Activated T-helper 1 cell treated with anti-CD3 and anti-CD28 coated beads, Interleukin-12 subunit alpha, Interleukin-12 subunit beta, Interleukin-2, Interleukin-4 antibody, amounts not matched to agents 30 ng/mL and 10 ng/mL and 1 ng/mL, durations not matched to agents 14 hours and 24 hours and 36 hours (primary cell): ENCODE measurements at regions of chr5 and their contacts with region 1.

Region 1: DNA sequence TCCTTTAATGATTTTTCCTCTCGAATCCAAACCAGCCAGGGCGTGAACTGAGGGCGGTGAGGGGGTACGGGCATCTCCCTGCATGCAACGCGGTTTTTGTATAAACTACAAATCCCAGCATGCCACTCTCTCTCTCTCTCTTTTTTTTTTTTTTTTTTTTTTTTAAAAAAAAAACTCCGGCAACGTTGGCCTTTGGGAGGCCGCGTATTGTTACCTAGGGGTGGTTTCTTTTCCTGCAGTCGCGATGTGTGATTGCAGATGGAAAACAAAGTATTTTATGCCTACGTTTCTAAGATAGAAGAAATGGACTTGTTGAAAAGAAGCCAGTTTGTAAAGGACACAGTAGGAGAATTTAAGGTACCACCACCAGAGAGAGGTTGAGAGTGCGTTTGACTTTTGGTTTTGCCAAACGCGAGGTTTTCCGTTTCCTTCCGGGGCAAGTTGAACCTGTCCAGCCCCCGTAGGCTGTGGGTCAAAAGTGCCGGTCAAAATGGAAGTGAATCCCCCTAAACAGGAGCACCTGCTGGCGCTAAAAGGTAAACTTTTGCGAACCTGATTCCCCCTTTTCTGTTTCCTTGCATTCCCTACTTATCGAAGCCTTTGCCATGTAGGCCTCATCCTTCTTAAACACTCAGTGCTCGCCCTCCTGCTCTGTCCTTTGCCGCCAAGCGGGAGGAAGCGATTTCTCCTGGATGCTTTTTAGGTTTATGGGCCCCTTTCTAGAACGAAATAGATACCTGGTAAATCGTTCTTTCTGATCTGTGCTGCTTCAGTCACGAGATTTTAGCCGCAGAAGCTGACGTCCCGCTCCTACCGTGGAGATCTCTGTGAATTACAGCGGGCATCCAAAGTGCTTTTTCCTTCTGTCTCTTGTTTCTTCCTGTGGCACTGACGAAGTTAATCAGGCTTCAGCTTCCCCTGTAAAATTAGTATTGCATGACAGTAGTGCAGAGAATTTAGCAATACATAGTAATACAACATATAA is at the starts of genes SHLD3 and TRAPPC13:
- DNase-seq: peak; percentile 81
- H3K4me3 Mint-ChIP-seq: peak within 1 kb of the TSS; percentile 94
- H3K27ac Mint-ChIP-seq: peak within 1 kb of the TSS; percentile 96
- H3K4me1 Mint-ChIP-seq: peaks cover 33% of the 10 kb centered on the region
- H3K27me3 Mint-ChIP-seq: no peaks in the 10 kb centered on the region
- total RNA-seq, gene SHLD3: 6.5 and 7.6 TPM in 2 replicates
- total RNA-seq, gene TRAPPC13: 21.7 and 23.7 TPM in 2 replicates

Region 2: DNA sequence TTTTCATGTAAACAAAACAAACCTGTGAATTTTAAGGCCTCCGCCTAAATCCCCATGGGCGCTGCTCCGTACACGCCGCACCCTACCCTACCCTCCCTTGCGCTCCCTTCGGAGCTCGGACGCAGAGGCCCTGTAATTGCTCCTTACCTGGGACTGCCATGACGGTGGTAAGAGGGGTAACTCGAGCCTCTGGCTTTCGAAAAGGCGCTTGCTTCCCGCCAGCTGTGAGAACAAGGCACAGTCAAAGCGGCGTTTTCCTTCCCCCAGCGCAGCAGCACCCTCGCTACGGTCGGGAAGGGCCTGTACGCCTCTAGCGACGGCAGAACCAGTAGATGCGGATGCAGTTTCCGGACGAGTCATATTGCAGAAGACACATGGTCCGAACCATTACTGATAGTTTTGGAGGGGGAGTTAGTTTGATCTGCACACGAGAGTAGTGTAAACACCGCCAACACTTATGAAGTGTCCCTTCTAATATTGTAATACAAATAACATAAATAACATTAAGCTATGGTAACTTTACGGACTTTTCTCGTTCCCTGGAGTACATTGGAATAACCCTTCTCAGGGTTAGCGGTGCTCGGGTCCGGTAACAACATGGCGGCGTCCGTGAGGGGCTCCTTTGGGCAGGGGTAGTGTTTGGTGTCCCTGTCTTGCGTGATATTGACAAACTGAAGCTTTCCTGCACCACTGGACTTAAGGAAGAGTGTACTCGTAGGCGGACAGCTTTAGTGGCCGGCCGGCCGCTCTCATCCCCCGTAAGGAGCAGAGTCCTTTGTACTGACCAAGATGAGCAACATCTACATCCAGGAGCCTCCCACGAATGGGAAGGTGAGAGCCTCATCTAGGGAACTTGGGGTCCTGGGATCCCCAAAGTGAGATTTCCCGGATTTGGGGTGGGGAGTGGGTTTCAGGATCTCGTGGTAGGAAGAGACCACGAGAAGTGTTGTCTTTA is 856.2 kb before region 1 on chr5 and contains the starts of genes CWC27 and SREK1IP1:
- intact Hi-C with region 1: loop called (anchors 1 kb)
- DNase-seq: peak; percentile 79
- H3K4me3 Mint-ChIP-seq: peak within 1 kb of the TSS; percentile 98
- H3K27ac Mint-ChIP-seq: peak within 1 kb of the TSS; percentile 96
- H3K4me1 Mint-ChIP-seq: peaks cover 51% of the 10 kb centered on the region
- H3K27me3 Mint-ChIP-seq: no peaks in the 10 kb centered on the region
- total RNA-seq, gene CWC27: 29.1 and 33.5 TPM in 2 replicates
- total RNA-seq, gene SREK1IP1: 29.4 and 31.7 TPM in 2 replicates

Region 3: DNA sequence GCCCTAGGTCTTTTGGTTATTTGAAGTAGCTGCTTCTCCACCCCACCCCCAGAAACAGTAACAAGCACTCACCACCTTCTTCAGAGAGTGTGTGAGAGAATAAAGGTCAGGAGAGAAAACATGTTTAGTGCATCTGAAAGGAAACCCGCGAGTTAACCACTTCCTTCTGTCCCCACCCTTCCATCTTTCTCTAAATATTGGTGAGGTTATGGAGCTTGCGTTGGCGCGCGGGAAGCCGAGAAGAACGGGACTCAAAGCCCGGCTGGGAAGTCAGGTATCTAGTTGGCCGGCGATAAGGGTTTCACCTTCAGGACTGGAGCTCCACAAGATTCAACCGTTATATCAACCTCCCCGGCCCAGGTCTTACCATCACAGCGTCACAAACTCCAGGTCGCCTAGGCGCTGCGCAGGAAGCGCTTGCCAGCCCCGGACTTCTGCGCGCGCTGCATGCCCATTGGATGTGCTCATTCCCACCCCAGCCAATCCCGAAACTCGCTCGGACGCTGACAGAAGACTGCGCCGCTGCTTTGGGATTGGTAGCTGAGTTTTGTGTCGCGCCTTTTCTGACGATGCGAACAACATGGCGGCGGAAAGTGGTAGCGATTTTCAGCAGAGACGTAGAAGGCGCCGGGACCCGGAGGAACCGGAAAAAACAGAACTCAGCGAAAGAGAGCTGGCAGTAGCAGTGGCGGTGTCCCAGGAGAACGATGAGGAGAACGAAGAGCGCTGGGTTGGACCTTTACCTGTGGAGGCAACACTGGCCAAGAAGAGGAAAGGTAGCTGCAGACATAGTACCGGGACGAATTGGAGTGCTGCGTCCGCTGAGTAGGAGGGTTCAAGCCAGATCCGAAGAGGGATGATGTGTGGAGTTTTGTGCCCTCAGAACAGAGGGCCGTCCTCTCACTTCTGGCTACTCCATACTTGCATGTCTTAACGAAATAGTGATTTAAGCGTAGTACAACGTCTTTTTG is 61.8 kb before region 1 on chr5 and contains the starts of genes CENPK and PPWD1:
- intact Hi-C with region 1: loop called (anchors 1 kb)
- DNase-seq: peak; percentile 94
- H3K4me3 Mint-ChIP-seq: peak within 1 kb of the TSS; percentile 95
- H3K27ac Mint-ChIP-seq: peak within 1 kb of the TSS; percentile 99
- H3K4me1 Mint-ChIP-seq: peaks cover 53% of the 10 kb centered on the region
- H3K27me3 Mint-ChIP-seq: no peaks in the 10 kb centered on the region
- total RNA-seq, gene CENPK: 81.0 and 85.1 TPM in 2 replicates
- total RNA-seq, gene PPWD1: 63.6 and 65.4 TPM in 2 replicates

Region 4: DNA sequence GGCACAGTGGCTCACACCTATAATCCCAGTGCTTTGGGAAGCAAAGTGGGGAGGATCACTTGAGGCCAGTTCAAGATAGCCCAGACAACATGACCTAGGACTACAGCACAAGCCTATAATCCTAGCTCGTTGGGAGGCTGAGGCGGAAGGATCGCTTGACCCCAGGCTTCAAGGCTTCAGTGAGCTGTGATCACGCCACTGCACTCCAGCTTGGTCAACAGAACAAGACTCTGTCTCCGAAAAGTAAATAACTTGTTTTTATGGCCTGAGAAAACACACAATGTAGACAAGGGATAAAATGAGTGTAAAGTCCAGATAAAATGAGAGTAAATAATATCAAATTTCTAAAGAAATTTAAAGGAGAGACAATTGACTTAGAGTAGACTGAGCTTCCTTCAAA is 26.3 kb after region 1 on chr5:
- intact Hi-C with region 1: no loop called
- DNase-seq: no peak
- H3K4me3 Mint-ChIP-seq: no peak overlapping the region
- H3K27ac Mint-ChIP-seq: no peak overlapping the region
- H3K4me1 Mint-ChIP-seq: no peaks in the 10 kb centered on the region
- H3K27me3 Mint-ChIP-seq: no peaks in the 10 kb centered on the region